AG04449 (cell line): ENCODE measurements at regions of chr5 and their contacts with region 1.

Region 1: DNA sequence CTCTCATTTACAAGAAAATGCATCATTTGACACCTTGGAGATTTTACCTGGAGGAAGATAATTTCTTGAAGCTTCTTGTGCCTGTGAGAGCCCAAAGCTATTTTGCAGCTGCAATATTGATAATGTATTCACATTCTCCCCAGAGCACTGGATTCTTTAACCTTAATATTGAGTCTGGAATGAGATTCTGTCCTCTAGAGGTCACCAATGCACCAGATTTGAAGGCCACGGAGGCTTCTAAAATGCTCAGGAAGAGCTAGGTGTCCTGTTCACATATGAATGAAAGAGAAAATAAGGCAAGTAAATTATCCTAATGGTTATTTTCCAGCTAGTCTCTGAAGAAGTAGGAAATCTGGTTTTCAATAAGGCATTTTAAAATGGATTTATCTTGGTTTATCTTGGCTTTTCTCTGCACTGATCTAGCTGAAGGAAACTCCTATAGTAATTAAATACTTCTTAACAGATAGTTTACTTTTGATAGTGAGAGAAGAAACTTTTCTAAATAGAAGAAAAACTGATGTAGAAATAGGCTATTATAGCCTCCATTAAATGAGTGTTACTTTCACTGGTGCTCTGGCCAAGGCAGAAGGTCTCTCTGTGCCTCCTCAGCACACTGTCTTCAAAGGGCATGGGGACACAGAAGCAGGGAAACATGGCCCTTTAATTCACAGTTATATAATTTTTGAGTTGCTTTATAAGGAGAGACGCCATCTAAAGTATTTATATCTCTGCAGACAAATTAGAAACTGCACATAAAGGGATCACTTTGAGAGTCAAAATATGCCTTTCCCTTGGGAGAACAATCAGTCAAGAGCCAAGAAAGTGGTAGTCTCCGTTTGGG is 297.0 kb upstream of the ACTBL2 start:
- DNase-seq: peak; percentile 23
- H3K4me3 ChIP-seq: no peak overlapping the region
- CTCF ChIP-seq: peak; percentile 62

Region 2: GRCh38 chr5:57494104-57495098 is 285.2 kb before region 1 on chr5:
- CTCF ChIA-PET with region 1: interaction called, 112 read pairs
- POLR2A ChIA-PET with region 1: no interaction called
- DNase-seq: peak; percentile 94
- H3K4me3 ChIP-seq: no peak overlapping the region
- CTCF ChIP-seq: no peak

Region 3: GRCh38 chr5:57650360-57651069 is 129.1 kb before region 1 on chr5:
- CTCF ChIA-PET with region 1: interaction called, 57 read pairs
- POLR2A ChIA-PET with region 1: no interaction called
- DNase-seq: no peak
- H3K4me3 ChIP-seq: no peak overlapping the region
- CTCF ChIP-seq: peak; percentile 63

Region 4: GRCh38 chr5:57862457-57862911 is 82.9 kb after region 1 on chr5:
- CTCF ChIA-PET with region 1: interaction called, 21 read pairs
- POLR2A ChIA-PET with region 1: no interaction called
- DNase-seq: peak; percentile 95
- H3K4me3 ChIP-seq: no peak overlapping the region
- CTCF ChIP-seq: no peak

Region 5: DNA sequence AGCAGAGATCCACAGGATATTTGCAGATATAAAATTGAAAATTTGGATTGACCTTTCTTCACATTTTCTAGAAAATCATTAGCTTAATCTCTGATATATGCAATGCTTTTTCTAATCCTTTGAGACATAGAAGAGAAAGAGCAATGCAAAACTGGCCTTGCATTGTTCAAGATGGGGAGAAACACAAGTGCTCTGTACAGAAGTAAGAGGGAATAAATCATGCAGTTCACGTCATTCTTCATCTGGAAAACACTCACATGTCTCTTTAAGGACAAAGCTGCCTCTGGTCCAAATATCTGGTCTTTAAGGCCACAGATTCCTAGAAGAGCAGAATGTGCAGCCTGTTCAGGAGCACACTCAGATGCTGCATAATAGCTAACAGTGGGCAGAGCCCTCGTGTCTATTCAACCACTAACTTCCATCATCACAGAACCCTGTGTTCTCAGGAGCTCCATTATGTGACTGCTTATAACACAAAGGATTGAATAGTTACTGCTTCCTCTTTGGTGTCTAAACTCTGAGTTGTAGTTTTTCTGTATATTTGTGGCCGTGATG is 402.8 kb after region 1 on chr5:
- CTCF ChIA-PET with region 1: interaction called, 10 read pairs
- POLR2A ChIA-PET with region 1: no interaction called
- DNase-seq: no peak
- H3K4me3 ChIP-seq: no peak overlapping the region
- CTCF ChIP-seq: no peak